Activated CD4-positive, alpha-beta T cell treated with anti-CD3 and anti-CD28 coated beads, Interleukin-2, amount 10 ng/mL, durations not matched to agents 7 days and 5 days (primary cell): ENCODE measurements at regions of chr16 and their contacts with region 1.

Region 1: DNA sequence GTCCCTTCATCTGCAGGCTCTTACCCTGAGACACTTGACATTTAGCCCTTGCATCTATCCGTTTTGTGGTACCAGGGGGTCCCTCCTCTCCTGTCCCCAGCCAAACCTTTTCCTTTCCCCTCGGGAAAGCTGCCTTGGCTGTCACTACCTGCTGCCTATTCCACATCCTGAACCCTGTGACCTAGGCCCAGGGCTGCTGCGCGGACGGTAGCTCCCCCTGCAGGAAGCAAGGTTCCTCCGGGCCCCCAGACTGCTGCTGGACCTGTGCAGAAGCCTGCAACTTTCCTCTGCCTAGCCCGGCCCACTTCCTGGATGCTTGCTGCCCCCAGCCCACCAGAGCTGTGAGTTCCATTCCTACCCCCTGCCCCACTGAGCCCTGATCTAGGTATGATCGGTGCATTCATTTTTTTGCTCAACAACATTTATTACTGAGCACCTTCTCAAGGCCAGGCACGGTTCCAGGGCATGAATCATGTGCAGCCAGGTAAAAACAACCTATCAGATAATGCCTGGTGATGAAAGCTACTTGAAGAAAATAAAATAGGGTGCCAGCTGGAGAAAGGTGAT is 10.5 kb upstream of the ALDOA start:
- DNase-seq: peak; percentile 58
- H3K4me3 Mint-ChIP-seq: peak overlapping the region; percentile 37
- H3K27ac Mint-ChIP-seq: peak overlapping the region; percentile 67
- H3K4me1 Mint-ChIP-seq: peaks cover 40% of the 10 kb centered on the region
- H3K27me3 Mint-ChIP-seq: peaks cover 2% of the 10 kb centered on the region

Region 2: DNA sequence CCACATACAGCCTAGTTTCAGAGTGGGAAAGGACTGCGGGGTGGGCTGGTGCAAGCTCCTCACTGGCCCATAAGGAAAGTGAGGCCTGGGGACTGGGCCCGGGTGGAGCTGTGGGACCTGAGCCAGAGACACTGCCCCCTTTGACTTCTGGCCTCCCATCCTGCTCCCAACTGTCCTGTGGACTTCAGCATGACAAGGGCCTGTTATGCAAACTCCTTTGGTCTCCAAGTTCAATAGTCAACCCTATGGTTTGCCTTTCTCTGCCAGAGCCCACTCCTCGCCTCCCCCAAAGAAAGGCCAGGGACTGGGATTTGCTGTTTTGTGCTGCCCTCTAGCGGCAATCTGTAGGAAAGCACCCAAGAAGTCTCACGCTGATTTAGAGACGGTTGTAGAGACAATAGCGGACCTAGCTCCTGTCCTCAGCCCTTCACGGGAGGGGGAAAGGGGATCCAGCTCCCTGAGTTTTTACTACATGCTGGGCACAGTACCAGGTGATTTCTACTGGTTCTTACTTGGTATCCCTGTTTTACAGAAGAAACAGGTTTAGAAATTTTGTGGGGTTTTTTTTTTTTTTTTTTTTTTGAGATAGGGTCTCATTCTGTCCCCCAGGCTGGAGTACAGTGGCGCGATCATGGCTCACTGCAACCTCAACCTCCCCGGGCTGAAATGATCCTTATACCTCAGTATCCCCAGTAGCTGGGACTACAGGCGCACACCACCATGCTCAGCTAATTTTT is 22.8 kb before region 1 on chr16:
- CTCF ChIA-PET with region 1: interaction called, 13 read pairs
- POLR2A ChIA-PET with region 1: no interaction called
- DNase-seq: peak; percentile 76
- H3K4me3 Mint-ChIP-seq: no peak overlapping the region
- H3K27ac Mint-ChIP-seq: no peak overlapping the region
- H3K4me1 Mint-ChIP-seq: peaks cover 20% of the 10 kb centered on the region
- H3K27me3 Mint-ChIP-seq: peaks cover 44% of the 10 kb centered on the region

Region 3: DNA sequence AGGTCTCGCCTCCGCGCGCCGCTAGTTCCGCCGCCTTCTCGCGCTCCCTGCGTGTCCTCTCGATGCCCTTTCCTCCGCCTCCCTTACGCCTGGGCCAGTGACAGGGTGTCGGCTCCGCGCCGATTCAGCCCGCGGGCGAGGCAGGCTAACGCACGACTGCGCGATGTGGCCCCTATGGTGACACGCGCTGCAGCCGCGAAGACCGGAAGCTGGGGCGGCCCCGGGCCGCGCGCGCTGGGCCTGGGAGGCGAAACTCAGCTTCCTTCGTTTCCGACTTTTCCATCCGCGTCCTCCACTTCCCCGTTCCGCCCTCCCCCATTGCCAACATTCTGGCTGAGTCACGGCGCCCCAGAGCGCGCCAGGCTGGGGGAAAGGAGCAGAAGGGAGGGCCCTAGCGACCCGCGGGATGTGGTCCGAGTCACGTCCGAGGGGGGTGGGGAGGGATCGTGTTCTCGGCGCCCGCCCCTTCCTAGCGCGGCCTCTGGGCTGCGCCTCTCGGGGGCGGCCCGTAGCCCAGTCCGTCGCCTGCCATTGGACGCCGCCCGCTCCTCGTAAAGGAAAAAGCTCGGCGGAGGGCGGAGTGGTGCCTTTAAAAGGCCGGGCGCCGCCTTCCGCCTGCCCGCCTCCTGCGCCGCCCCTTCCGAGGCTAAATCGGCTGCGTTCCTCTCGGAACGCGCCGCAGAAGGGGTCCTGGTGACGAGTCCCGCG is 10.2 kb after region 1 on chr16 and contains the start of gene ALDOA:
- CTCF ChIA-PET with region 1: interaction called, 19 read pairs
- POLR2A ChIA-PET with region 1: interaction called, 8 read pairs
- DNase-seq: peak; percentile 96
- H3K4me3 Mint-ChIP-seq: peak within 1 kb of the TSS; percentile 99
- H3K27ac Mint-ChIP-seq: peak within 1 kb of the TSS; percentile 99
- H3K4me1 Mint-ChIP-seq: peaks cover 41% of the 10 kb centered on the region
- H3K27me3 Mint-ChIP-seq: no peaks in the 10 kb centered on the region
- total RNA-seq, gene ALDOA: 1,139 to 1,329 TPM

Region 4: GRCh38 chr16:30082545-30083090 is 27.5 kb after region 1 on chr16:
- CTCF ChIA-PET with region 1: no interaction called
- POLR2A ChIA-PET with region 1: no interaction called
- DNase-seq: no peak
- H3K4me3 Mint-ChIP-seq: no peak overlapping the region
- H3K27ac Mint-ChIP-seq: peak overlapping the region; percentile 58
- H3K4me1 Mint-ChIP-seq: peaks cover 27% of the 10 kb centered on the region
- H3K27me3 Mint-ChIP-seq: no peaks in the 10 kb centered on the region

Region 5: DNA sequence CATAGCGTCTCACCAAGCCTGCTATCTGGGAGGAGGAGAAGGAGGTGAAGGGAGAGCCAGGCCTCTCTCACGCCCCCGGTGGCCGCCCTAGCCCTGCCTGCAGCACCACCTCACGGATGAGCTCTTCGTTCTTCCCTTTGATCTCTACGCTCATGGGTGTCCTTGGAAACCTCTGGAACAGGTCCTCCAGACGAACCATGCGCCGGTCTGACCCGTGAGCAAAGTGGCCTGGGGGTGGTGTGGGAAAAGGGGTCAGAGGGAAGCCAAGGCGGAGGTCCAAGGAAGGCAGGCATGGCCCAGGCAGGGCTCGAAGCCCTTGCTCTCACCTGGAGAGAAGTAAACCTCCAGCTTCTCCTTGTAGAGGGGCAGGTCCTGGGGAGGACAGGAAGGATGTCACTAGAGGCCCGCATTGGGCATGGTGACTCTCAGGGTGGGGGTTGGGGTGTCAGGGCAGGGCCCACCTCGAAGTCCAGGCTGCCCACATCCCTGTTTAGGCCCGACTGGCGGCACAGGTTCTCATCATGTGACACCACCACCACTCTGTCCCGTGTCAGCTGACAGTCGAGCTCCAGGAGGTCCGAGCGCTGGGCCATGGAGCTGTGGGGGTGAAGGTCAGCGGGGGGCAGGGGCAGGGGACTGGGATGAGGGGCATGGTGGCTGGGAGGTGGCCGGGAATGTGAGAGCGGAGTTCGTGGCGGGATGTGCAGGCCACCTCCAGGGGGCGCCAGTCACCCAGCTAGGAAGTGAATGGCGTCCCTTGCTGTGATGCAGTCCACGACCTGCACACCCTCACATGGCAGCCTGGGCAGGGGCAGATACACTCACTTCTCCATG is 57.3 kb after region 1 on chr16:
- CTCF ChIA-PET with region 1: interaction called, 12 read pairs
- POLR2A ChIA-PET with region 1: no interaction called
- DNase-seq: peak; percentile 68
- H3K4me3 Mint-ChIP-seq: no peak overlapping the region
- H3K27ac Mint-ChIP-seq: peak overlapping the region; percentile 36
- H3K4me1 Mint-ChIP-seq: peaks cover 10% of the 10 kb centered on the region
- H3K27me3 Mint-ChIP-seq: no peaks in the 10 kb centered on the region